PC-3 (cell line): ENCODE measurements at regions of chr6 and their contacts with region 1.

Region 1: GRCh38 chr6:24824142-24824938 is 25.6 kb upstream of the ARMH2 start:
- DNase-seq: no peak
- ATAC-seq: no peak
- H3K4me3 ChIP-seq: no peak overlapping the region
- H3K27ac ChIP-seq: no peak overlapping the region
- H3K4me1 ChIP-seq: peaks cover 5% of the 10 kb centered on the region; the same call in 1 of the 2 replicates
- H3K27me3 ChIP-seq: no peaks in the 10 kb centered on the region
- CTCF ChIP-seq: no peak

Region 2: DNA sequence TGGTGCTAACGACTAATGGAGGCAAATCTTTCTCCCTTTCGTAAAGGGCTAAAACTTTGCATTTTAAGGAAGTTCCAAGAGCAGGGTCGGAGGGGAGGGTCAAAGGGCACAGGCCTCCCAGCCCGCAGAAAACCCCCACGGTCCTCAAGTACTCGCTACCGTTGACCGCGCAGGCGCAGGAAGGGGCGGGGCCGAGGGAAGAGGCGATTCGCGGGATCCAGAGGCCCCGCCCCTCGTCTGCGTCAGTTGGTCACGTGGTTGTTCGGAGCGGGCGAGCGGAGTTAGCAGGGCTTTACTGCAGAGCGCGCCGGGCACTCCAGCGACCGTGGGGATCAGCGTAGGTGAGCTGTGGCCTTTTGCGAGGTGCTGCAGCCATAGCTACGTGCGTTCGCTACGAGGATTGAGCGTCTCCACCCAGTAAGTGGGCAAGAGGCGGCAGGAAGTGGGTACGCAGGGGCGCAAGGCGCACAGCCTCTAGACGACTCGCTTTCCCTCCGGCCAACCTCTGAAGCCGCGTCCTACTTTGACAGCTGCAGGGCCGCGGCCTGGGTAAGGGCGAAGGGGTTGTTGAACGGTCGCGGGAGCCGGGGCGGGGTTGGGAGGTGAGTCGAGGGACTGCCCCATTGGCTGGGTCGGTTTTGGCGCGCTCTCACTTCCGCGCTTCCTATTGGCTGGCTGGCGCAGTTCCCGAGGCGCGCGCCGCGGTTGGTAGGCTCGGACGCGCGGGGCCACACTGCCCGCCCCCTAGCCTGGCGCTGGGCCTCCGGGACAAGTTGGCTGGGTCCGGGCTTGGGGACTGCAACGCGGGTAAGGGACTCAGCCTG is 49.4 kb before region 1 on chr6 and contains the start of gene GMNN:
- CTCF ChIA-PET with region 1: no interaction called
- POLR2A ChIA-PET with region 1: no interaction called
- intact Hi-C with region 1: no loop called
- DNase-seq: peak; percentile 95
- ATAC-seq: peak; percentile 91
- H3K4me3 ChIP-seq: peak within 1 kb of the TSS; percentile 97
- H3K27ac ChIP-seq: peak within 1 kb of the TSS; percentile 89
- H3K4me1 ChIP-seq: peaks cover 29% of the 10 kb centered on the region
- H3K27me3 ChIP-seq: no peaks in the 10 kb centered on the region
- CTCF ChIP-seq: no peak
- total RNA-seq, gene GMNN: 44.6 and 57.4 TPM in 2 replicates

Region 3: DNA sequence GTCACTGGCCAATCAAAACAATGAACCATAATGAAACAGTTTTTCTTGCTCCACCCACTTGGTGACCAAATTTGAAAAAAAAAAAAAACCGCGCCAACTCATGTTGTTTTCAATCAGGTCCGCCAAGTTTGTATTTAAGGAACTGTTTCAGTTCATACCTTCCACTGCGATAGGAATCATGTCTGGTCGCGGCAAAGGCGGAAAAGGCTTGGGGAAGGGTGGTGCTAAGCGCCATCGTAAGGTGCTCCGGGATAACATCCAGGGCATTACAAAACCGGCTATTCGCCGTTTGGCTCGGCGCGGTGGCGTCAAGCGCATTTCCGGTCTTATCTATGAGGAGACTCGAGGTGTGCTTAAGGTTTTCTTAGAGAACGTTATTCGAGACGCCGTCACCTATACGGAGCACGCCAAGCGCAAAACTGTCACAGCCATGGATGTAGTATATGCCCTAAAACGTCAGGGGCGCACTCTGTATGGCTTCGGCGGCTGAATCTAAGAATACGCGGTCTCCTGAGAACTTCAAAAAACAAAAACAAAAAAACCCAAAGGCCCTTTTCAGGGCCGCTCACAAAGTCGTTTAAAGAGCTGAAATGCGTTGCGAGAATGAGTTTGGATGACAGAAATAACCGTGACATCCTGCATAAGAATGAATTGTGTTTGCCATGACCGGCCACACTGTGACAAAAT is 1279.6 kb after region 1 on chr6:
- CTCF ChIA-PET with region 1: no interaction called
- POLR2A ChIA-PET with region 1: interaction called, 15 read pairs
- intact Hi-C with region 1: no loop called
- DNase-seq: peak; percentile 97
- ATAC-seq: peak; percentile 81
- H3K4me3 ChIP-seq: peak overlapping the region; percentile 68
- H3K27ac ChIP-seq: peak overlapping the region; percentile 84
- H3K4me1 ChIP-seq: peaks cover 28% of the 10 kb centered on the region
- H3K27me3 ChIP-seq: no peaks in the 10 kb centered on the region
- CTCF ChIP-seq: peak; percentile 46; the same call in 1 of the 2 replicates